Activated CD4-positive, alpha-beta memory T cell treated with anti-CD3 and anti-CD28 coated beads for 36 hours (primary cell): ENCODE measurements at regions of chr1 and their contacts with region 1.

Region 1: DNA sequence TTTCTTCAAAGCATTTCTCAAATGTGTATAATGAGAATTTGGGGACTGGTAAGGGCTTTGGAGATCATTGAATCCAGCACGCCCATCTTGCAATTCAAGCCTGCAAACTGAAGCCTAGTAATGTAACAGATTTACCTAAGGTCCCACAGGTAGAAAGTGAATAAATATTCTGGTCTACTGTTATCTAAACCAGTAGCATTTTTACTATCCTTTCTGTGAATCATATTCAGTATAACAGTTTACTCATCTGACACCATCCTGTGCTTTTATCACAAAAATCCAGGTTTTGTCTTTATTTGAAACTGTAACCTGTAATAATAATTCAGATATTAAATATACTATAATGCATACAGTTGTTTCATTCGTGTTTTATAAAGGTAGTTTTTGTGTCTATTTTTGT is 17.4 kb downstream of the KCNA3 start:
- DNase-seq: no peak
- H3K4me3 Mint-ChIP-seq: no peak overlapping the region
- H3K27ac Mint-ChIP-seq: no peak overlapping the region
- H3K4me1 Mint-ChIP-seq: peaks cover 50% of the 10 kb centered on the region
- H3K27me3 Mint-ChIP-seq: no peaks in the 10 kb centered on the region

Region 2: DNA sequence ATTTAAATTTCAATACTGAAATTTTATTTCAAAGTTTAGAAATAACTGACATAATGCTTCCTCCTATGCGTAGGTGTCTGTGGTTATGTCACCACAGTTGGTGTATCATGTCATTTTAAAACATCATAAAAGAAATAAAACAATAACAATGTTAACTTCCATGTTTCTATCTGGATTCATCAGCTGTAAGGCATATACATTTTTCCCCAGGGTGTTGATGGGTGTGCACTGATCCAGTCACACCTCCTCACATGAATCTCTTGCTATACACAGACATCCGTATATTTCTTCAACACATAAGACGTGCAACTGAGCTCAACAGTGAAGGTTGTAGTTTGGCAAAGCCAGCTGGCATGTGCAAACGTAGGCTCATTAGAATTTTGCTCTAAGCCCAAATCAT is 11.2 kb after region 1 on chr1:
- CTCF ChIA-PET with region 1: interaction called, 3 read pairs
- POLR2A ChIA-PET with region 1: interaction called, 4 read pairs
- intact Hi-C with region 1: loop called (anchors 1 kb)
- DNase-seq: peak; percentile 14
- H3K4me3 Mint-ChIP-seq: peak overlapping the region; percentile 66
- H3K27ac Mint-ChIP-seq: peak overlapping the region; percentile 88
- H3K4me1 Mint-ChIP-seq: peaks cover 25% of the 10 kb centered on the region
- H3K27me3 Mint-ChIP-seq: no peaks in the 10 kb centered on the region

Region 3: DNA sequence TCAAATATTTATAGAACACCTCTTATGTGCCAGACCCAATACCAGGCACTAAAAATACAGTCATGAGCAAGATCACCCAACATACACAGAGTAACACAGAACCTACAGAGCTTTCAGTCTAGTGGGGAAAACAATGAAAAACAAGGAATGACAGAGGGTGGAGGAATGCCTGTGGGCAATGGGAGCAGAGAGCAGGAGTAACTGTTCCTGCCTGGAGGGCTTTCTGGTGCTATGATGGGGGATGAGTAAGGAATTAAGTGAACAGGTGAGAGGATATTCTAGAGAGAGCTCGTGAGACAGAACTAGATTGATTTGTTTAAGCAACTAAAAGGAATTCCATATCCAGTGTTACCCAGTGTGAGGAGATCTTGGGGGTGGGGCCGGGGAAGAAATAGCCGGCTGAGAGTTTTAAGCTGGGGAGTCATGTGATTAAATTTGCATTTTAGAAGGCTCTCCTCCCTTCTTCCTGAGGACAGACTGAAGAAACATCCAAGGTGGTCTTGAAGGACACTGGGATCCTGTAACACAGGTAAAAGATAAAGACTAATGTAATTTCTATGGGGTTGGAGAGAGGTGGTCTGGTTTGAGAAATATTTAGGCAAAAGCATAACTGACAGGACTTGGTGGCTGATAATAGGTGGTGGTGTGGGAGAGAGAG is 213.5 kb after region 1 on chr1:
- CTCF ChIA-PET with region 1: no interaction called
- POLR2A ChIA-PET with region 1: no interaction called
- intact Hi-C with region 1: no loop called
- DNase-seq: no peak
- H3K4me3 Mint-ChIP-seq: peak overlapping the region; percentile 2
- H3K27ac Mint-ChIP-seq: peak overlapping the region; percentile 99
- H3K4me1 Mint-ChIP-seq: peaks cover 33% of the 10 kb centered on the region
- H3K27me3 Mint-ChIP-seq: no peaks in the 10 kb centered on the region